ENCODE measurements at regions of chr12 and their contacts with region 1.

Region 1: GRCh38 chr12:23600919-23601318 is 348.6 kb downstream of the SOX5 start:
- DNase-seq: no peak
- H3K4me3 ChIP-seq: no peak overlapping the region
- H3K27ac ChIP-seq: no peak overlapping the region
- H3K4me1 ChIP-seq: no peaks in the 10 kb centered on the region
- H3K27me3 ChIP-seq: no peaks in the 10 kb centered on the region
- CTCF ChIP-seq: no peak
- POLR2A ChIP-seq: no peak

Region 2: DNA sequence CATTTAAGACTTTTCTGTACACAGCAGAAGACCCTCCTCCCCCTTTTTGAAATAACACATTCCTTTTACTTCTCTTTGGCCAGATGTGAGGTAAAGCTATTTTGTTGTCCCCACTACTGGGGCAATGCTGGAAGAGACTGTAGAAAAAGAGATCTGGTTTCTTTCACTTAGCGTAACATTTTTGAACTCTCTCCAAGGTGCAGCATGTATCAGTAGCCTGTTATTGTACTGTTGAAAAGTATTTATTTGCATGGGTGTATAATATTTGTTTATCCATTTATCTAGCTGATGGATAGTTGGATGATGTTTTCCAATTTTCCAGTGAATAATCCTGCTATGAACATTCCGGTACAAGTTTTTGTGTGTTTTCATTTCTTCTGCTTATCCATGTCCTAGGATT is 13.4 kb after region 1 on chr12:
- intact Hi-C with region 1: loop called (anchors 2 kb)
- DNase-seq: no peak
- H3K4me3 ChIP-seq: no peak overlapping the region
- H3K27ac ChIP-seq: no peak overlapping the region
- H3K4me1 ChIP-seq: no peaks in the 10 kb centered on the region
- H3K27me3 ChIP-seq: no peaks in the 10 kb centered on the region
- CTCF ChIP-seq: no peak
- POLR2A ChIP-seq: no peak